Heart left ventricle (tissue), 16 donors: ENCODE measurements at regions of chr2 and their contacts with region 1.

Region 1: DNA sequence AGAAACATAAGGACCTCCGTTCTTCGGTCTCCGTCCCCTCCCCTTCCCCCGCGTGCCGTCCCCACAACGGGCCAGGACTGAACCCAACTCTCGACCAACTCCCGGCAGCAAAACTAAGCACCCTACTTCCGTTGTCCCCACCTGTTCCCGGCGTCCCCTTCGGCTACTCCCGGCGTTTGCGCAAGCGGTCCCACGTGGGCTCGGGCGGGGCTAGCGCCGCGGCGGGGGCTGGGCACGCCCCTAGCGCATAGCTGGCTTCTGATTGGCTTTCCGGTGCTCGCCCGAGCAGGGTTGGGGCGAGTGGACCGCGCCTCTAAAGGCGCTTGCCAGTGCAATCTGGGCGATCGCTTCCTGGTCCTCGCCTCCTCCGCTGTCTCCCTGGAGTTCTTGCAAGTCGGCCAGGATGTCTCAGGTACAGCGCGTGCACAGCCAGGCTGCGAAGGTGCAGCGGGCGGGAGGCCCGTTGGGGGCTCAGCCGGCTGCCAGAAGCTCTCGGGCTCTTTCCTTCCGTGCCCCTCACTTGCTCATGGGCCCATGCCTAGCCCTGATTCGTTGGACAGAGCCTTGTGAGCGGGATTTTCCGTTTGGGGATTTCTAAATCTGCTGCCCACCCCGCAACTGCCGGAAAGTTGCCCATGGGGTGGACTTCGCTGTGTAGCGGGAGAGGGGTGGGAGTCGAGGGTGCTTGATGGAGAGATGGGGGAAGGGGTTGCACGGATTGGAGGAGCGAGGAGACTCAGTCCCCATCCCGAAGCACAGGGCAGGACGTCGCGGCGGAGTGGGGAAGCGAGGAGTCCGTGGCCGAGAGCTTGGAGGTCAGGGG is at the starts of genes C2orf76 and DBI:
- DNase-seq: peak; percentile 96 to 97 (median 96)
- ATAC-seq: peak; percentile 96 to 98 (median 97)
- H3K4me3 ChIP-seq: peak within 1 kb of the TSS; percentile 67 to 97 (median 84)
- H3K27ac ChIP-seq: peak within 1 kb of the TSS; percentile 79 to 97 (median 92)
- H3K4me1 ChIP-seq: peaks cover 0 to 65% (median 37%) of the 10 kb centered on the region in 12 donors
- H3K27me3 ChIP-seq: no peaks in the 10 kb centered on the region
- CTCF ChIP-seq: no peak
- POLR2A ChIP-seq: peak; percentile 46 to 91
- total RNA-seq, gene C2orf76: 1.7 to 11.8 (median 8.8) TPM
- total RNA-seq, gene DBI: 208 to 502 (median 273) TPM

Region 2: GRCh38 chr2:119111115-119112017 is 255.5 kb before region 1 on chr2:
- intact Hi-C with region 1: no loop called
- DNase-seq: no peak
- ATAC-seq: no peak
- H3K4me3 ChIP-seq: no peak overlapping the region
- H3K27ac ChIP-seq: no peak overlapping the region
- H3K4me1 ChIP-seq: no peaks in the 10 kb centered on the region
- H3K27me3 ChIP-seq: peaks cover 0 to 25% (median 8%) of the 10 kb centered on the region in 9 donors
- CTCF ChIP-seq: no peak
- POLR2A ChIP-seq: no peak

Region 3: GRCh38 chr2:119311356-119311755 is 55.5 kb before region 1 on chr2:
- intact Hi-C with region 1: loop called in 6 of 10 experiments (anchors 5 to 10 kb)
- DNase-seq: no peak
- ATAC-seq: peak in 3 of 4 donors; percentile 12 to 24 (median 23)
- H3K4me3 ChIP-seq: no peak overlapping the region
- H3K27ac ChIP-seq: peak overlapping the region in 1 of 12 donors; percentile 31
- H3K4me1 ChIP-seq: peaks cover 0 to 30% (median 14%) of the 10 kb centered on the region in 12 donors
- H3K27me3 ChIP-seq: no peaks in the 10 kb centered on the region
- CTCF ChIP-seq: no peak
- POLR2A ChIP-seq: no peak

Region 4: DNA sequence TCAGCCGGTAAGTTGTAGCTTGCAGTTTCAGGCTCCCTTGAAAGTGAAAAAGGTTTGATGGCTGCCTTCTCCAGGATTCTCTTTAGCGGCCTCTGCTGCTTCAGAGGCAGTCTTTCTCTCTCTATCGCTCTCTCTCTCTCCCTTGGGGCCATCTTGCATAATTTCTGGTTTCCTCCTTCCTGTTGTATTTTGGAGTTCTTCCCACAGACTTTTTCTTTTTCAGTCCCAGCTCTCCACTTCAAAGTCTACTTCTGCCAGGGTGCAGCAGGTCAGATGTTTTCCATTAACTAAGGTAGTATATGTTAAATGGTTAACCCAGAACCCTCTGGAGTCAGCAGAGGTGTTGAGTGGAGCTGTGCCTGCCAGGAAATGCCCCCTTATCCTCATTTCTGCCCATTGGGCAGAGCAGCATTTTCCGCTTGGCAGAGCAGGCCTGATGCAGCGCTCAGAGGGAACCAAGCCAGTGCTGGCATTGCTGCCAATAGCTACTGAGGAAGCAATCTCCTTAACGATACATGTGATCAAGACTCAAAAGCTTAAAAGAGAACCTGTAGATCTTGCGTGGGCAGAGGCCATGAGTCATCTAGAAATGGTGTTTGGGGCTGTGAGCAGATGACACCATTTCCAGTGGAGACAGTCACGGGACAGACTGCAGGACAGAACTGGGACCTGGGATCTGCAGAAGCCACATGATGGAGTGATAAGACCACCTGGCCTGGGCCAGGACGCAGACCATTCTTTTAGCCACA is 20.7 kb after region 1 on chr2:
- intact Hi-C with region 1: loop called in 1 of 10 experiments (anchors 2 kb)
- DNase-seq: peak; percentile 49 to 81 (median 78)
- ATAC-seq: peak; percentile 59 to 84 (median 82)
- H3K4me3 ChIP-seq: no peak overlapping the region
- H3K27ac ChIP-seq: peak overlapping the region in 11 of 12 donors; percentile 9 to 82 (median 62)
- H3K4me1 ChIP-seq: peaks cover 0 to 37% (median 21%) of the 10 kb centered on the region in 12 donors
- H3K27me3 ChIP-seq: no peaks in the 10 kb centered on the region
- CTCF ChIP-seq: peak in 6 of 12 donors; percentile 15 to 60 (median 43)
- POLR2A ChIP-seq: no peak

Region 5: GRCh38 chr2:119565481-119565880 is 198.6 kb after region 1 on chr2:
- intact Hi-C with region 1: no loop called
- DNase-seq: no peak
- ATAC-seq: no peak
- H3K4me3 ChIP-seq: no peak overlapping the region
- H3K27ac ChIP-seq: no peak overlapping the region
- H3K4me1 ChIP-seq: no peaks in the 10 kb centered on the region
- H3K27me3 ChIP-seq: no peaks in the 10 kb centered on the region
- CTCF ChIP-seq: no peak
- POLR2A ChIP-seq: no peak